ENCODE measurements at regions of chr17 and their contacts with region 1.

Region 1: GRCh38 chr17:409848-410545 is 57.4 kb upstream of the RPH3AL start:
- DNase-seq: peak; percentile 98
- ATAC-seq: peak; percentile 86
- H3K4me3 ChIP-seq: peak overlapping the region; percentile 68 to 81 (median 79)
- H3K27ac ChIP-seq: peak overlapping the region; percentile 60
- H3K4me1 ChIP-seq: peaks cover 33% of the 10 kb centered on the region
- H3K27me3 ChIP-seq: no peaks in the 10 kb centered on the region
- CTCF ChIP-seq: peak; percentile 50
- EP300 ChIP-seq: no peak
- POLR2A ChIP-seq: peak; percentile 33 to 61; a peak in 3 of 4 replicates
- RAD21 ChIP-seq: 0 out of 2 replicates have a peak, but pooled peaks have one; percentile 15

Region 2: DNA sequence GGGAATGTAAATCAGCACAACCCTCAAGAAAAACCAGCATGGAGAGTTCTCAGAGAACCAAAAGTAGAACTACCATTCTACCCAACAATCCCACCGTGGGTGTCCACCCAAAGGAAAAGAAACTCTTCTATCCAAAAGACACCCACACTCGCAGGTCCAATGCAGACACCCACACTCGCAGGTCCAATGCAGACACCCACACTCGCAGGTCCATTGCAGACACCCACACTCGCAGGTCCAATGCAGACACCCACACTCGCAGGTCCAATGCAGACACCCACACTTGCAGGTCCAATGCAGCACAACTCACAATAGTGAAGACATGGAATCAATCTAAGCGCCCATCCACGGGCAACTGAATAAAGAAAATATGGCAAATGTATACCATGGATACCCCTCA is 19.6 kb after region 1 on chr17:
- CTCF ChIA-PET with region 1: no interaction called
- POLR2A ChIA-PET with region 1: no interaction called
- in situ Hi-C with region 1: no loop called
- intact Hi-C with region 1: no loop called
- DNase-seq: no peak
- ATAC-seq: no peak
- H3K4me3 ChIP-seq: no peak overlapping the region
- H3K27ac ChIP-seq: no peak overlapping the region
- H3K4me1 ChIP-seq: no peaks in the 10 kb centered on the region
- H3K27me3 ChIP-seq: no peaks in the 10 kb centered on the region
- CTCF ChIP-seq: no peak
- EP300 ChIP-seq: no peak
- POLR2A ChIP-seq: no peak
- RAD21 ChIP-seq: no peak

Region 3: GRCh38 chr17:688100-688989 is 278.3 kb after region 1 on chr17:
- CTCF ChIA-PET with region 1: no interaction called
- POLR2A ChIA-PET with region 1: no interaction called
- in situ Hi-C with region 1: no loop called
- intact Hi-C with region 1: loop called (anchors 5 kb)
- DNase-seq: peak; percentile 9
- ATAC-seq: no peak
- H3K4me3 ChIP-seq: no peak overlapping the region
- H3K27ac ChIP-seq: no peak overlapping the region
- H3K4me1 ChIP-seq: peaks cover 9% of the 10 kb centered on the region; the same call in 1 of the 2 replicates
- H3K27me3 ChIP-seq: no peaks in the 10 kb centered on the region
- CTCF ChIP-seq: peak; percentile 27
- EP300 ChIP-seq: no peak
- POLR2A ChIP-seq: no peak
- RAD21 ChIP-seq: no peak

Region 4: DNA sequence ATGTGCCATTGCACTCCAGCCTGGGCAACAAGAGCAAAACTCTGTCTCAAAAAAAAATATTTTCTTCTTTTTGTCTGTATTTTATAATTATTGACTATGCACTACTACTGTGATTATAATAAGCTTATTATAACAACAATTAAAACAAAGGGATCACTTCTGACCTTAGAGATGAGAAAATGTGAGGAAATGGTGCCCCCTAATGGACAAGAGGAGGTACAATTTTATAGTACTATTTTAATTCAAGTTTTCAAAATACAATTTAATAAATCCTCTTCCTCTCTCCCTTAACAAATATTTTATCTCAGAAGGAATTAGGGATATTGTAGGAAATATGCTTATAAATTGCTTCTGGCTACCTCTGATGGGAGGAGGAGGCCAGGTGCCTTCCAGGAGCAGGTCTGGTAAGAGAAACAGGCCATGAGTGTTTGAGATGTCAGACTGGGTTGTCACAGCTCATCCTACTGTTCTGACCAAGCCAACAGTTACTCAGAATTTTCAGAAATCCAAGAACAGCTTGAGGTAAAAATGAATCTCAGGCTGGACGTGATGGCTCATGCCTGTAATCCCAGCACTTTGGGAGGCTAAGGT is 290.6 kb after region 1 on chr17:
- CTCF ChIA-PET with region 1: interaction called, 4 read pairs
- POLR2A ChIA-PET with region 1: no interaction called
- in situ Hi-C with region 1: no loop called
- intact Hi-C with region 1: loop called (anchors 2 kb)
- DNase-seq: no peak
- ATAC-seq: no peak
- H3K4me3 ChIP-seq: no peak overlapping the region
- H3K27ac ChIP-seq: no peak overlapping the region
- H3K4me1 ChIP-seq: no peaks in the 10 kb centered on the region
- H3K27me3 ChIP-seq: no peaks in the 10 kb centered on the region
- CTCF ChIP-seq: peak; percentile 62
- EP300 ChIP-seq: no peak
- POLR2A ChIP-seq: no peak
- RAD21 ChIP-seq: no peak